CD4-positive, alpha-beta T cell (primary cell): ENCODE measurements at regions of chr1 and their contacts with region 1.

Region 1: GRCh38 chr1:145996433-145997015 is at the start of gene TXNIP:
- DNase-seq: peak; percentile 70 to 98 (median 91)
- ATAC-seq: peak; percentile 72
- H3K4me3 ChIP-seq: peak within 1 kb of the TSS; percentile 61
- H3K4me3 Mint-ChIP-seq: peak within 1 kb of the TSS; percentile 95
- H3K27ac ChIP-seq: peak within 1 kb of the TSS; percentile 91 to 92
- H3K27ac Mint-ChIP-seq: peak within 1 kb of the TSS; percentile 95
- H3K4me1 ChIP-seq: peaks cover 57% of the 10 kb centered on the region
- H3K4me1 Mint-ChIP-seq: peaks cover 71% of the 10 kb centered on the region
- H3K27me3 ChIP-seq: no peaks in the 10 kb centered on the region
- H3K27me3 Mint-ChIP-seq: no peaks in the 10 kb centered on the region
- CTCF ChIP-seq: no peak
- total RNA-seq, gene TXNIP: 1,317 to 1,358 TPM

Region 2: DNA sequence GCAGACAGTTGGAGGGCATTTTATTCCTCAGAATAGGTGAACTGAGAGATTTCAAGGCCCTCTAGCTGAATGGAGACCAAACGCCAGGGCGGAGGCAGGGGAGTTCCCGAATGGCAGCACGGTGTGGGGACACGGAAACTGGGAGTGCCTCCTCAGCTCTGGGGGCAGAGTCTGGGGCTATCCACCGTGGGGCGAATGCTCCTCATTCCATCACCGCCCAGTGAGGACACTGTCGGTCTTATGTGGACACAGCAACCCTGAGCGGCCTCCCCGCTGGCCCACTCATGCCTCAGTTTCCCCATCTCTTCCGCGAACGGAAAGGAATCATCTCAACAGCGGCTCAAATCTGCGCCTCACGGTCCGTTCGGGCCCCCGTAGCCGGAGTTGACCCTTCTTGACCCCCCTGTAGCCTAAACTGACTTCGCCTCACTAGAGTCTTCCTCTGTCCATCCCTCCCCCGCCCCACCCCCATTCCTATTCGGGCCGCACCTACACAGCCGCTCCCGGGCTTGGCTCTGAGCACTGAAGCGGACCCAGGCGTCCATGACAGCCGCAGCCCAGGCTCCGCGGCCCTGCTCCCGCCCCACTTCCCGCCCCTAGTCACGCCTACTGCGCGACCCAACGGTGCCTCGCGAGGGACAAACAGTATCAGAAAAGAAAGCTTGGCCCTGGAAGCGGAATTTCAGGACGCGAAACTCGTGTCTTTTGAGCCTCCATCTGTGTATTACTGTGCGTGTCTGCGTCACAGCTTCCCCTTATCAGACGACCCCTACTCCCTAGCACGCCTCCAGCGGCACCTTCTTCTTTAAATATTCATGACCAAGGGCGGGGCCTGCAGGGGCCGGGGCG is 78.2 kb before region 1 on chr1 and contains the start of gene PEX11B:
- CTCF ChIA-PET with region 1: no interaction called
- POLR2A ChIA-PET with region 1: interaction called, 29 read pairs
- intact Hi-C with region 1: loop called in 1 of 2 experiments (anchors 2 kb)
- DNase-seq: peak; percentile 87 to 96 (median 92)
- ATAC-seq: peak; percentile 90
- H3K4me3 ChIP-seq: peak within 1 kb of the TSS; percentile 87
- H3K4me3 Mint-ChIP-seq: peak within 1 kb of the TSS; percentile 94
- H3K27ac ChIP-seq: peak within 1 kb of the TSS; percentile 52 to 60
- H3K27ac Mint-ChIP-seq: peak within 1 kb of the TSS; percentile 92
- H3K4me1 ChIP-seq: peaks cover 31% of the 10 kb centered on the region
- H3K4me1 Mint-ChIP-seq: peaks cover 47% of the 10 kb centered on the region
- H3K27me3 ChIP-seq: no peaks in the 10 kb centered on the region
- H3K27me3 Mint-ChIP-seq: no peaks in the 10 kb centered on the region
- CTCF ChIP-seq: no peak
- total RNA-seq, gene PEX11B: 11.6 to 13.2 TPM

Region 3: GRCh38 chr1:145963995-145964901 is 32.3 kb before region 1 on chr1 and contains the starts of genes ANKRD34A and POLR3GL:
- CTCF ChIA-PET with region 1: no interaction called
- POLR2A ChIA-PET with region 1: interaction called, 115 read pairs
- intact Hi-C with region 1: loop called in 1 of 2 experiments (anchors 5 kb)
- DNase-seq: peak; percentile 75 to 96 (median 88)
- ATAC-seq: peak; percentile 90
- H3K4me3 ChIP-seq: peak within 1 kb of the TSS; percentile 72
- H3K4me3 Mint-ChIP-seq: peak within 1 kb of the TSS; percentile 94
- H3K27ac ChIP-seq: peak within 1 kb of the TSS; percentile 58 to 62
- H3K27ac Mint-ChIP-seq: peak within 1 kb of the TSS; percentile 94
- H3K4me1 ChIP-seq: peaks cover 58% of the 10 kb centered on the region
- H3K4me1 Mint-ChIP-seq: peaks cover 58% of the 10 kb centered on the region
- H3K27me3 ChIP-seq: no peaks in the 10 kb centered on the region
- H3K27me3 Mint-ChIP-seq: no peaks in the 10 kb centered on the region
- CTCF ChIP-seq: no peak
- total RNA-seq, gene ANKRD34A: 0.42 to 0.47 TPM
- total RNA-seq, gene POLR3GL: 17.2 to 17.8 TPM

Region 4: DNA sequence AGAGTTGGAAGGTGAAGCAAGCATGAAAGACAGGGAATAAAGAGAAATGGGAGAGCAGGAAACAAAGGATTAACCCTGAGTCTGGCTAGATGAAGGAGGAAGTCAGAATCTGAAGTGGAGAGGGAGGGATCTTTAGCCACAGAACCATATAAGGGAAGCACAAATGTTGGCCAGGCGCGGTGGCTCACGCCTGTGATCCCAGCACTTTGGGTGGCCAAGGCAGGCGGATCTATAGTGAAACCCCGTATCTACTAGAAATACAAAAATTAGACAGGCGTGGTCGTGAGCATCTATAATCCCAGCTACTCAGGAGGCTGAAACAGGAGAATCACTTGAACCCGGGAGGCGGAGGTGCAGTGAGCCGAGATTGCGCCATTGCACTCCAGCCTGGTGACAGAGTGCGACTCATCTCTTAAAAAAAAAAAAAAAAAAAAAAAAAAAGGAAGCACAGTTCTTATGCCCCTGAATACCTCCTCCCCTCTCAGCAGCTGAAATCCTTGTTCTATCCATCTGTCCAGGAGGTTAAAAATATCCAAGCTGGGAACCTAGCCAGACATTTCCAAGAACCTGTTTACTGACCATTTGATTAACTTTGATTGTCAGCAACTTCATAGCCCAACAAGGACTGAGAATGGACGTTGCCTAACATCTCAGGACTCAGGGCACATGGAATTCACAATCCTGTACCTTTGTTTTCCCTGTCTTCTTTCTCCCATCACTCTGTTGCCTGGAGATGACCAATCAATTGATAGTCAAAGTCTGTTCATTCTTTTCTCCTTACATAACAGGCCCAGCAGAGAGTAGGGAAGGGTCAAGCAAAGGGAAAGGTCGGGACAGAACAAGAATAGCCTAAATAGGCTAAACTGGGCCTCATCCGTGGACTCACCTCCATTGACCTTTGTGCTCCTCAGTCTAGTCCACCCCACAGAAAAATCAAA is 10.8 kb before region 1 on chr1:
- CTCF ChIA-PET with region 1: interaction called, 61 read pairs
- POLR2A ChIA-PET with region 1: interaction called, 625 read pairs
- intact Hi-C with region 1: loop called (anchors 1 to 2 kb)
- DNase-seq: peak in 2 of 14 experiments; percentile 37 to 42
- ATAC-seq: no peak
- H3K4me3 ChIP-seq: no peak overlapping the region
- H3K4me3 Mint-ChIP-seq: peak overlapping the region; percentile 35
- H3K27ac ChIP-seq: peak overlapping the region; percentile 42 to 45
- H3K27ac Mint-ChIP-seq: no peak overlapping the region
- H3K4me1 ChIP-seq: peaks cover 83% of the 10 kb centered on the region
- H3K4me1 Mint-ChIP-seq: peaks cover 25% of the 10 kb centered on the region
- H3K27me3 ChIP-seq: no peaks in the 10 kb centered on the region
- H3K27me3 Mint-ChIP-seq: no peaks in the 10 kb centered on the region
- CTCF ChIP-seq: no peak

Region 5: GRCh38 chr1:146012737-146013403 is 16.3 kb after region 1 on chr1:
- CTCF ChIA-PET with region 1: interaction called, 4 read pairs
- POLR2A ChIA-PET with region 1: interaction called, 28 read pairs
- intact Hi-C with region 1: no loop called
- DNase-seq: peak in 12 of 14 experiments; percentile 26 to 85 (median 50)
- ATAC-seq: peak; percentile 73
- H3K4me3 ChIP-seq: no peak overlapping the region
- H3K4me3 Mint-ChIP-seq: no peak overlapping the region
- H3K27ac ChIP-seq: no peak overlapping the region
- H3K27ac Mint-ChIP-seq: no peak overlapping the region
- H3K4me1 ChIP-seq: peaks cover 1% of the 10 kb centered on the region
- H3K4me1 Mint-ChIP-seq: peaks cover 11% of the 10 kb centered on the region
- H3K27me3 ChIP-seq: peaks cover 0 to 3% of the 10 kb centered on the region in 2 experiments
- H3K27me3 Mint-ChIP-seq: peaks cover 8% of the 10 kb centered on the region
- CTCF ChIP-seq: peak; percentile 95